Activated CD8-positive, alpha-beta T cell treated with anti-CD3 and anti-CD28 coated beads for 36 hours (primary cell): ENCODE measurements at regions of chr9 and their contacts with region 1.

Region 1: GRCh38 chr9:104027295-104027694 is 66.8 kb upstream of the SMC2 start:
- DNase-seq: no peak
- ATAC-seq: no peak
- H3K4me3 Mint-ChIP-seq: no peak overlapping the region
- H3K27ac Mint-ChIP-seq: no peak overlapping the region
- H3K4me1 Mint-ChIP-seq: peaks cover 17% of the 10 kb centered on the region
- H3K27me3 Mint-ChIP-seq: peaks cover 1% of the 10 kb centered on the region
- CTCF ChIP-seq: no peak

Region 2: GRCh38 chr9:104093647-104094533 is 66.6 kb after region 1 on chr9 and contains the start of gene SMC2:
- CTCF ChIA-PET with region 1: interaction called, 3 read pairs
- POLR2A ChIA-PET with region 1: interaction called, 8 read pairs
- intact Hi-C with region 1: loop called (anchors 5 kb)
- DNase-seq: peak; percentile 95
- ATAC-seq: peak; percentile 95
- H3K4me3 Mint-ChIP-seq: peak within 1 kb of the TSS; percentile 91
- H3K27ac Mint-ChIP-seq: peak within 1 kb of the TSS; percentile 100
- H3K4me1 Mint-ChIP-seq: peaks cover 39% of the 10 kb centered on the region
- H3K27me3 Mint-ChIP-seq: no peaks in the 10 kb centered on the region
- CTCF ChIP-seq: no peak
- total RNA-seq, gene SMC2: 64.4 to 66.4 TPM

Region 3: GRCh38 chr9:104682642-104683041 is 655.3 kb after region 1 on chr9:
- CTCF ChIA-PET with region 1: no interaction called
- POLR2A ChIA-PET with region 1: no interaction called
- intact Hi-C with region 1: no loop called
- DNase-seq: peak; percentile 8
- ATAC-seq: peak; percentile 51
- H3K4me3 Mint-ChIP-seq: no peak overlapping the region
- H3K27ac Mint-ChIP-seq: no peak overlapping the region
- H3K4me1 Mint-ChIP-seq: no peaks in the 10 kb centered on the region
- H3K27me3 Mint-ChIP-seq: no peaks in the 10 kb centered on the region
- CTCF ChIP-seq: peak; percentile 57